ENCODE measurements at regions of chr14 and their contacts with region 1.

Region 1: DNA sequence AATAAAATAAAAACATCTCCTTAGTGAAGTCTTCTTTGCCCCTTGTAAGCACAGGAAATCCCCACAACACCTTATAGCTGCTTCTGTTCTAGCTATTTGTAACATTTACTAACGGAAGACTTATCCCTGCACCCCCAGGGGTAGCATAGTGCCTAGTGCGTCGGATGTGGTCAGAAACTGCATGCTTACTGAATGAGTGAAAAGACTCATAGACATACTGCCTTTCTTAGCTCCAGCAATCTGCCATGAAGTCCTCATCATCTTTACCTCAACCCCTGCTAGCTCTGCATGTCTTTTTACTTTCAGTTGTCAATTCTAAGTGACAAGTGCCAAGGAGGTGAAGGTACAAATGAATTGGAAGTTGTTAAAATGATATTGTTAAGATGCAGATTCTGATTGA is 12.9 kb downstream of the RIOX1 start:
- ATAC-seq: no peak
- H3K4me3 ChIP-seq: no peak overlapping the region
- H3K27ac ChIP-seq: no peak overlapping the region
- H3K4me1 ChIP-seq: no peaks in the 10 kb centered on the region

Region 2: DNA sequence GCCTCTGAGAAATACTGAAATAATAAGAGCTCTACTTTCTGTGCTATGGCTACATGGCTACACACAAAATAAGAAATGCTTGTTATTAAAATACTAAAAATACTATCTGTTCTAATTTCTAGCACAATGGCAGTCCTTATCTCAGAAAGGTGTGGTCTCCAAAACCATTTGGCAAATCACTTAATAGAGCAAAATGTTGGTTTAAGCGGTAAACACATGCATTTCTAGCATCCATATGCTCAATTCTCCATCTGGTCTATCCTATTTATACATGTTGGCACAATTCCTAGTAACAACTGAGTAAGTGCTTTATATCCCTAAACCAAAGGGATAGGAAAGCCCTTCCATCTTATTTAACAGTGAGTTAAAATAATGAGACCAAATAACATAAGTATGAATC is 159.3 kb before region 1 on chr14:
- in situ Hi-C with region 1: no loop called
- ATAC-seq: no peak
- H3K4me3 ChIP-seq: no peak overlapping the region
- H3K27ac ChIP-seq: no peak overlapping the region
- H3K4me1 ChIP-seq: no peaks in the 10 kb centered on the region

Region 3: GRCh38 chr14:73613046-73613383 is 109.4 kb after region 1 on chr14:
- in situ Hi-C with region 1: loop called in 1 of 9 experiments (anchors 25 kb)
- ATAC-seq: peak; percentile 11 to 32 (median 23)
- H3K4me3 ChIP-seq: peak overlapping the region; percentile 44 to 56 (median 53)
- H3K27ac ChIP-seq: peak overlapping the region in 1 of 2 donors; percentile 5
- H3K4me1 ChIP-seq: peaks cover 0 to 3% of the 10 kb centered on the region in 2 donors

Region 4: DNA sequence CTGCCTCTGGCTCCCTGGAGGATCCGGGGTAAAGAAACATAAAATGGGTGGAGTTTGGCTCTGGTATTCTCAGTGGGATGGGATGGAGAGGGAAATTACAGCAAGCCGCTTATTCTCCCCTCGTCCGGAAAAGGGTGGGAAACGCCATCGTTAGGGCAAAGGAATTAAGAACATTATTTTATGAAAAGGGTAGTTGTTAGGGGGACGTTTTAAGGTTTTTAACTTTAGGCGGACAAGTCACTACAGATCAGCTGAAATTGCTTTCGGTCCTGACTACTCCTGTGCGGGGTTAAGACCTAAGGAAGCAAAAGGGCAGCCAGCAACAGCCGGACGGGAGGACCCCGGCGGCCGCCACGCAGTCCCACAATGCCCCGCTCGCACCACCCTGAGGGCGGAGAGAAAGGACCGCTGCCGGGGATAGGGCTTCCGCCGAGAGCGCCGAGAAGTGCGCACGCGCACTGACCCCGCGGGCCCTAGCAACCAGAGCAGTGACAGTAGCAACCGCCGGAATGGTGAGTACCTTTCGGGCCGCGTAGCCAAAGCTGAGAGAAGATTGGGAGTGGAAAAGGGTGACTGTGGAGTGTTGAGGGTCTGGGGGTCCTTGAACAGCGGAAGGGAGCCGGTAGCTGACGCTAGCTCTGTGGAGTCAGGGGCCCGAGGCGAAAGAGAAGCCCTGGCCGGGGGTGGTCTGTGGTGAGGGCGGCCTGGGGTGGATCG is 141.0 kb after region 1 on chr14 and contains the start of gene DNAL1:
- in situ Hi-C with region 1: loop called in 2 of 9 experiments (anchors 25 kb)
- ATAC-seq: peak; percentile 94 to 100 (median 99)
- H3K4me3 ChIP-seq: peak within 1 kb of the TSS; percentile 66 to 79 (median 68)
- H3K27ac ChIP-seq: peak within 1 kb of the TSS; percentile 73 to 84
- H3K4me1 ChIP-seq: peaks cover 5 to 11% of the 10 kb centered on the region in 2 donors
- total RNA-seq, gene DNAL1: 9.7 to 32.1 (median 12.2) TPM